ENCODE measurements at regions of chr12 and their contacts with region 1.

Region 1: DNA sequence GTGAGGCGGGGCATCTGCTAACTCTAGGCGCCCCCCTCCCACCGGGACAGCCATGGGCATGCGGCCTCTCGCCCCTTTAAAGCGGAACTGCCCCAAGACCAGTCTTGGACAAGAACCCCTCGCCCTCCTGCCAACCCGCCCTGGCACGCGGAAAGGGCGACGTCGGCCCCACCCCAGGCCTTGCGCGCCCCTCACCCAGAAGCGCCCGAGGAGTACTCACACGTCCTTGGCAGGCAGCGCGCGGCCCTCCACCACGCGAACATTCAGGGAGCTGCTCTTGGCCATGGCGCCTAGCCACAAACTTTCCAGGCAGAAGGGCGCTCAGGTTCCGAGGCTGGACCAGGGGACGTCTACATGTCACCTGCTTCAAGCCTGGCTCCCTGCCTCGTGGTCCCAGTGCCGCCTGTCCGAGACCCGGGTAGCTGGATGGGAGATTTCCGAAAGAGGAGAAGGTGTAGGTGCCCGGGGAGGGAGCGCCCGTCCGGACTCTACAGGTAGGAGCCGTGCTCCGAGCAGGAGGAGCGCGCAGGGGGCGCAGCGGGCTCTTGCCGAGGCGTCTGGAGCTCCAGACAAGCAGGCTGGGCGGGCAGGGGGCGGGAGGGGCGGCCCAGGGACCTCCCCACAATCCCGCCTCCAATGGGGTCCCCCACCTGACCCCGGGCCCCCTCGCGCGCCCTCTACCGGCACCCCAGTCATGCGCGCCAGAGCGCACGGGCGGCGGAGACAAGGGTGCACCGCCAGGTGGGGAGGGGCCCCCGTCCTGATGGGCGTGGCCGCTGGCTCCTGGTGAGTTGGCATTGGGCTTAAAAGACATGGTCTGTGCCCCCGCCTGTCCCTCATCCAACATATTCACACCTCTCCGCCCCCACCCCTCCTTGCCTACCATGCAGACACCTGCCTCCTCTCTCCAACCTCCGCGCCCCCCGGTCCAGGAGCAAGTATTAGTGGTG is at the start of gene RASAL1:
- DNase-seq: peak in 8 of 10 donors; percentile 51 to 84 (median 60)
- H3K4me3 ChIP-seq: peak within 1 kb of the TSS; percentile 47 to 84 (median 69)
- H3K27ac ChIP-seq: peak within 1 kb of the TSS; percentile 42 to 98 (median 93)
- H3K27me3 ChIP-seq: peaks cover 0 to 14% (median 0%) of the 10 kb centered on the region in 45 donors
- CTCF ChIP-seq: peak in 55 of 56 donors; percentile 24 to 85 (median 69)
- total RNA-seq, gene RASAL1: 17.0 to 95.6 (median 38.8) TPM

Region 2: GRCh38 chr12:113098446-113098896 is 37.0 kb before region 1 on chr12:
- intact Hi-C with region 1: loop called in 1 of 2 experiments (anchors 5 kb)
- DNase-seq: peak; percentile 76 to 92 (median 86)
- H3K4me3 ChIP-seq: peak overlapping the region in 42 of 59 donors; percentile 4 to 61 (median 36)
- H3K27ac ChIP-seq: peak overlapping the region; percentile 33 to 94 (median 84)
- H3K27me3 ChIP-seq: peaks cover 0 to under 1% (median 0%) of the 10 kb centered on the region in 45 donors
- CTCF ChIP-seq: peak; percentile 39 to 93 (median 82)

Region 3: DNA sequence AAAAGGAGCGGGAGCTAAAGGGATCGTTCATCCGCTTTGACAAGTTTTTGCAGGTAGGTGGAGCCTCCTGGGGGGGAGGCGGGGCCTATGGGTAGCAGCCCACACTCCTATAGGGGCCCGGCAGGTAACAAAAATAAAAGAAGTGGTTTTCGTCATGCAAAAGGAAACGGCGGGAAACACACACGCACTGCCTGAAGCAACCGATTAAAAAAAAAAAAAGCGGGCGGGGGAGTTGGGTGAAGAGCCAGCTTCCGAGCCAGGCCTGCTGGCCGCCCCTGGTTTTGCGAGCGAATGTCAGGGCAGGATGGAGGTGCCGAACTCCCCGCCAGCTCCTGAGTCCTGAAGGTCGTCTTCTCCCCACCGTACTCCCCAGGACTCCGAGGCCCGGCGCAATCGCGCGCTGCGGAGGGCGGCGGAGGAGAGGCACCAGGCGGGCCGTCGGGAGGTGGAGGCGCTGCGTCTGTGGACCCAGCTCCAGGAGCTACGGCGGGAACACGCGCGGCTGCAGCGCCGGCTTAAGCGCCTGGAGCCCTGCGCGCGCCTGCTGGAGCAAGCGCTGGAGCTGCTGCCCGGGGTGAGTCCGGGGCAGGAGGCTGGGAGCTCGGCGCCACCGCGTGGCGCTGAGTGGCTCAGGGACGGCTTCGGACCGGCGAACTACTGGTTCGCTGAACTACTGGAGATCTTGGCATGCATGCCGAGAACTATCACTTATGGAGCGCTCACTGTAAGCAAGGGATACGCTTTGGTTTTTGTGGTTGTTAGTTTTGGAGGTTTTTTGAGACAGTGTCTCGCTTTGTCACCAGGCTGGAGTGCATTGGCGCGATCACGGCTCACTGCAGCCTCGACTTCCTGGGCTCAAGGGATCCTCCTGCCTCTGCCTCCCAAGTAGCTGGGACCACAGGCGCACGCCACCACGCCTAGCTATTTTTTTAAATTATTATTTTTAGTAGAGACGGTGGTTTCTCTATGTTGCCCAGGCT is 17.7 kb after region 1 on chr12:
- intact Hi-C with region 1: loop called in 1 of 2 experiments (anchors 1 kb)
- DNase-seq: peak; percentile 66 to 87 (median 74)
- H3K4me3 ChIP-seq: peak overlapping the region; percentile 30 to 74 (median 55)
- H3K27ac ChIP-seq: peak overlapping the region in 29 of 59 donors; percentile 1 to 78 (median 55)
- H3K27me3 ChIP-seq: peaks cover 0 to 12% (median 0%) of the 10 kb centered on the region in 45 donors
- CTCF ChIP-seq: peak; percentile 35 to 91 (median 73)